ENCODE measurements at regions of chr19 and their contacts with region 1.

Region 1: DNA sequence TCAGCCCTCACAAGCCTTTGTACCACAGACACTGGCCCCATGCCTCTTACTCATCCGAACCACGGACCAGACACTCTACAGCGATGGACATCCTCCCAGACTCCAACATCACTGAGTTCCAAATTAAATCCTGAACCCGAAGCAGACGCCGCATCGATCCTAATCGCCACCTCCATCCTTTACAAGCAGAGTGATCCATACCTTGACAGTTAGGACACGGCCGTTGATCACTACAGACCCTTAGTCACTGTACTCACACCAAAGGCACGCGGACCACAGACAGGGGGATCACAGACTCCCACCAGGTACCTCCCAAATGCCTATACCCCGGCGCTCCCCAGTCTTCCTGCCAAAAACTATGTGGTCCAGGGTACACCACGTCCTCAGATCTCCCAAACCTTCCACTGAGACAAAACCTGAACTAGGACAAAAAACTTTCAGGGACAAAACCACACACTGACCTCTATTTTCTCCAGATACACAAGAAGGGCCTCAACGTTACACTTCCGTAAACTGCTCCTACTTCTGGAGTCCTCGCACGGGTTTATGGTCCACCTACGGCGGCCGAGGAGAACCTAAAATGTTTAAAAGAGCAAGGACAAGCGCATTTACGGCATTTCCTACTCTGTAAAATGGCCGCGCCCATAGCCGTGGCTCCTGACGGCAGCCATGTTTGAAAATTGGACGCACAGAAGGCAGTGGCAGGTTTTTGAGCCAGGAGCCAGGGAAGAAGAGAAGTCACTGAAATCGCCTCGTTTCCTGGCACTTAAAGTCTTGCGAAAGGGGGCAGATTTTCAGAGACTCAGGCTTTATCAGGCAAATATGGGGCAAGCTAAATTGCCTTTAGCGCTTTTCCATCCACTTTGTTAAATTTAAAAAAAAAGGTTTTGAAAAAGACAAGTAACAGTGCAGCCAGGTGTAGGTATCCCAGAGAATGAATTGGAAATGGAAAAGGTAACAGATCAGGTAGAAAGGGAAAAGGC is at the start of gene ZNF350:
- DNase-seq: peak; percentile 76 to 97 (median 85)
- ATAC-seq: peak; percentile 99
- H3K4me3 ChIP-seq: peak within 1 kb of the TSS; percentile 88
- H3K4me3 Mint-ChIP-seq: peak within 1 kb of the TSS; percentile 92
- H3K27ac ChIP-seq: peak within 1 kb of the TSS; percentile 29 to 67
- H3K27ac Mint-ChIP-seq: peak within 1 kb of the TSS; percentile 78
- H3K4me1 ChIP-seq: peaks cover 17% of the 10 kb centered on the region
- H3K4me1 Mint-ChIP-seq: peaks cover 24% of the 10 kb centered on the region
- H3K27me3 ChIP-seq: no peaks in the 10 kb centered on the region
- H3K27me3 Mint-ChIP-seq: no peaks in the 10 kb centered on the region
- CTCF ChIP-seq: no peak
- total RNA-seq, gene ZNF350: 37.6 to 39.2 TPM

Region 2: GRCh38 chr19:51887522-51888498 is 98.8 kb before region 1 on chr19 and contains the start of gene ZNF577:
- CTCF ChIA-PET with region 1: interaction called, 3 read pairs
- POLR2A ChIA-PET with region 1: no interaction called
- intact Hi-C with region 1: loop called in 1 of 2 experiments (anchors 5 kb)
- DNase-seq: peak; percentile 27 to 85 (median 60)
- ATAC-seq: peak; percentile 89
- H3K4me3 ChIP-seq: peak within 1 kb of the TSS; percentile 51
- H3K4me3 Mint-ChIP-seq: peak within 1 kb of the TSS; percentile 97
- H3K27ac ChIP-seq: peak within 1 kb of the TSS in 1 of 2 donors; percentile 20
- H3K27ac Mint-ChIP-seq: peak within 1 kb of the TSS; percentile 87
- H3K4me1 ChIP-seq: peaks cover 7% of the 10 kb centered on the region
- H3K4me1 Mint-ChIP-seq: peaks cover 17% of the 10 kb centered on the region
- H3K27me3 ChIP-seq: no peaks in the 10 kb centered on the region
- H3K27me3 Mint-ChIP-seq: no peaks in the 10 kb centered on the region
- CTCF ChIP-seq: no peak
- total RNA-seq, gene ZNF577: 8.0 to 10.3 TPM

Region 3: GRCh38 chr19:51904331-51905165 is 82.1 kb before region 1 on chr19 and contains the start of gene ZNF649:
- CTCF ChIA-PET with region 1: no interaction called
- POLR2A ChIA-PET with region 1: interaction called, 3 read pairs
- intact Hi-C with region 1: loop called (anchors 5 to 10 kb)
- DNase-seq: peak; percentile 69 to 90 (median 74)
- ATAC-seq: peak; percentile 91
- H3K4me3 ChIP-seq: peak within 1 kb of the TSS; percentile 92
- H3K4me3 Mint-ChIP-seq: peak within 1 kb of the TSS; percentile 100
- H3K27ac ChIP-seq: peak within 1 kb of the TSS; percentile 53 to 58
- H3K27ac Mint-ChIP-seq: peak within 1 kb of the TSS; percentile 89
- H3K4me1 ChIP-seq: peaks cover 14% of the 10 kb centered on the region
- H3K4me1 Mint-ChIP-seq: peaks cover 29% of the 10 kb centered on the region
- H3K27me3 ChIP-seq: peaks cover 6 to 9% of the 10 kb centered on the region in 2 experiments
- H3K27me3 Mint-ChIP-seq: peaks cover 36% of the 10 kb centered on the region
- CTCF ChIP-seq: no peak
- total RNA-seq, gene ZNF649: 13.0 to 13.2 TPM

Region 4: DNA sequence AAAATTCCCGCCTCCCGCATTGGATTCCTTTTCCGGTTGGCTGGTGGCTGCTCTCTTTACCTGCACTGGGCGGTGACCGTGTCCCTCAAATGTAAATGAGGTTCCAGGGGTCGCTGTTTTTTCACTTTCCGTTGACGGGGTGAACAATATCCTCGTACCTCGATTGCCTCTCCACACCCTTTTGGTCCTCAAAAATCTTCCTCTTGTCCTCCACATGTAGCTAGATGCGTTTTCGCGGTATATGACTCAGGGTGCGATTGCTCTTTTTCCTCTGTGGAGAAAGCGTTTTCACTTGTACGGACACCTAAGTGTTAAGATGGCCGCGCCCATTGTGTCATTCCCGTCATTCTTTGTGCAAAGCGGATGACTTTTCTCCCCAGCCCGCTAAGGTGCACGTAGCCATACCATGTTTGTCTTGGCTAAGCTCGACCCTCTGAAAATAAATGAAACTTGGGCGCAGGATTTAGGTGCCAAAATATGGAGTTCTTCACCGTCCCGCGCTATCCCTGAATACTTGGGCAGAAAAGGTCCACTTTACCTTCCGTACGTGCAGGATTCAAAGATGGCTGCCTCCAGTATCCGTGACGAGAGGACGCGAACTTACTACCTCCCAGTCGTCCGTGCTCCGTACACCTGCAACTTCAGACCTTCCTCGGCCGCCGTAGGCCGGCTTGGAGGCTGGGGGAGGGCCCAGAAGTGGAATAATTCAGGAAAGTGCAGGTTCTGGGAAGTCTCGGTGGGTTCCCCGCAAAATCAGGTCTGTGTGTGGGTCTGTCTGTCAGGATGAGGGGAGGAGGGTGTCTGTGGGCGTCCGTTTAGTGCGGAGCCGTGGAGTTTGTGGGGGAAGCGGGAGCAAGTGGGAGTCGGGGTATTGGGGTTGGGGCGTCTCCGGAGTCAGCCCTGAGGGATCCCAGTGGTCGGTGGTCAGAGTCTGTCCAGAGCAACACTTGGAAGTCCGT is 59.5 kb before region 1 on chr19 and contains the start of gene ZNF613:
- CTCF ChIA-PET with region 1: no interaction called
- POLR2A ChIA-PET with region 1: no interaction called
- intact Hi-C with region 1: loop called in 1 of 2 experiments (anchors 1 kb)
- DNase-seq: peak; percentile 72 to 93 (median 79)
- ATAC-seq: peak; percentile 88
- H3K4me3 ChIP-seq: peak within 1 kb of the TSS; percentile 78
- H3K4me3 Mint-ChIP-seq: peak within 1 kb of the TSS; percentile 97
- H3K27ac ChIP-seq: peak within 1 kb of the TSS; percentile 55 to 60
- H3K27ac Mint-ChIP-seq: peak within 1 kb of the TSS; percentile 86
- H3K4me1 ChIP-seq: peaks cover 17% of the 10 kb centered on the region
- H3K4me1 Mint-ChIP-seq: peaks cover 36% of the 10 kb centered on the region
- H3K27me3 ChIP-seq: no peaks in the 10 kb centered on the region
- H3K27me3 Mint-ChIP-seq: no peaks in the 10 kb centered on the region
- CTCF ChIP-seq: peak; percentile 22
- total RNA-seq, gene ZNF613: 0.67 to 1.3 TPM

Region 5: DNA sequence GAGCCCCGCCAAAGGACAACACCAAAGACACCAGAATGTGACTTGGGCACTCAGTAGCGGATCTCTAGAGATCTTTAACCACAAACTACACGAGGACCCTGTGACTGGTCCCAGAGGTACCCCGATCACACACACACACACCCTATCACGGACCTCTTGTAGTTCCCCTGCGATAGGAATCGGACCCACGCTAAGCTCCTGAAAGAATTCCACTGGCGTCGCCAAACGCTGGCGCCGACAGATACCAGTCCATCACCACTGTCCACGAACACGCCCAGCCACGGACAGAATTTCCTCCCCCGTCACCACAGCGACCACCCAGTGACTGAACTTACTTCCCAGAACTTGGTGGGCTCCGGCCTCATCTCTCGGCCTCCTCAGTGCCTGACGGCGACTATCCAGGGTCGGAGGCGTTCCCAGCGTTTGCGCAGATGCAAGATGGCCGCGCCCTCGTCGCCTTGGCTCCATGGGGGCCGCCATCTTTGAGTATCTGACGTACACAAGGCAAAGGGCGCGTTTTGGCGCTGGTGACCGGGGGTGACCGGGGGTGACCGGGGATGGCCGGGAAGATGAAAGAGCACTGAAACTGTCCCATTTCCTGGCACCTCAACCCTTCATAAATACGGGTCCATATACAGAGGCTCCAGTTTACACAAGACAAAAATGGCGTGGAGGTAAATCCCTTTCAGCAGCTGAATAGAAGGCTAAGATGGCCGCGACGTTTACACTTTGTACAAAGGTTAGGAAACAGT is 21.4 kb after region 1 on chr19 and contains the start of gene ZNF615:
- CTCF ChIA-PET with region 1: no interaction called
- POLR2A ChIA-PET with region 1: interaction called, 4 read pairs
- intact Hi-C with region 1: loop called (anchors 1 kb)
- DNase-seq: peak; percentile 78 to 92 (median 82)
- ATAC-seq: peak; percentile 91
- H3K4me3 ChIP-seq: peak within 1 kb of the TSS; percentile 95
- H3K4me3 Mint-ChIP-seq: peak within 1 kb of the TSS; percentile 95
- H3K27ac ChIP-seq: peak within 1 kb of the TSS; percentile 82 to 88
- H3K27ac Mint-ChIP-seq: peak within 1 kb of the TSS; percentile 88
- H3K4me1 ChIP-seq: peaks cover 12% of the 10 kb centered on the region
- H3K4me1 Mint-ChIP-seq: peaks cover 24% of the 10 kb centered on the region
- H3K27me3 ChIP-seq: no peaks in the 10 kb centered on the region
- H3K27me3 Mint-ChIP-seq: no peaks in the 10 kb centered on the region
- CTCF ChIP-seq: no peak
- total RNA-seq, gene ZNF615: 8.9 to 9.2 TPM

Region 6: DNA sequence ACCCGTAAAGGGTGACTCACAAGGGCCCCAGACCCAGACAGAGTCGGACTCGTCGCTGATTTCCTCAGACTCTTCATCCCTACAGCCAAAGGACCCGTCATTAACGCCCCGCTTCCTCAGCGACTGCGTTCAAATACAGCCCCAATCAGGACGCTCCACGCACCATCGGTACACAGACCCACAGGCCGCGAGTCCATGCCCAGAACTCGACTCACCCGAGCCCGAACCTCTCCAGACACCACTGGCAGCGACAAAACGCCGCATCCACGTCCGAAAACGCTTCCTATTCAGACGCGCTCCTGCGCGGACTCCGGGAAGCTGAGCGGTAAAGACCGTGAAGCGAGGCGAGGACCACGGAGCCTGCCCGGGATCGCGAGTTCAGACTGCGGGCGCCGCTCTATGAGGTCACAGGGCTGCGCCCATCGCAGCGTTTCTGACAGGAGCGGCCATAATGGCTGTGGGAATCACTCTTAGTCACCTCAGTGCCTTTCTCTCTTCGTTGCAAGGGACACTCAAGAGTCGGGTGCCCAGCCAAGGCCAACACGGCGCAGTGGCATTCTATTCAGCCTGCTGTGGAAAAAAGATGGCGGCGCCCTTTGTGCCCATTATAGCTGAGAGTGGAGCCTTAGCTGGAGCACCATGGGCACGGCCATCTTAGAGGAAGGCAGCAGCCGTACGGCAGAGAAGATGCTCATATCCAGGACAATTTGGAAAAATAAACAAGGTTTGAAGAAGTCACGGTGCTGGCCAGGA is 41.6 kb after region 1 on chr19 and contains the start of gene ZNF614:
- CTCF ChIA-PET with region 1: no interaction called
- POLR2A ChIA-PET with region 1: no interaction called
- intact Hi-C with region 1: loop called in 1 of 2 experiments (anchors 1 kb)
- DNase-seq: peak; percentile 71 to 92 (median 82)
- ATAC-seq: peak; percentile 85
- H3K4me3 ChIP-seq: peak within 1 kb of the TSS; percentile 85
- H3K4me3 Mint-ChIP-seq: peak within 1 kb of the TSS; percentile 95
- H3K27ac ChIP-seq: peak within 1 kb of the TSS; percentile 89 to 90
- H3K27ac Mint-ChIP-seq: peak within 1 kb of the TSS; percentile 93
- H3K4me1 ChIP-seq: peaks cover 16% of the 10 kb centered on the region
- H3K4me1 Mint-ChIP-seq: peaks cover 38% of the 10 kb centered on the region
- H3K27me3 ChIP-seq: no peaks in the 10 kb centered on the region
- H3K27me3 Mint-ChIP-seq: no peaks in the 10 kb centered on the region
- CTCF ChIP-seq: no peak
- total RNA-seq, gene ZNF614: 9.7 to 10.5 TPM

Region 7: GRCh38 chr19:52048555-52049501 is 62.2 kb after region 1 on chr19 and contains the start of gene ZNF432:
- CTCF ChIA-PET with region 1: no interaction called
- POLR2A ChIA-PET with region 1: interaction called, 4 read pairs
- intact Hi-C with region 1: loop called (anchors 2 to 5 kb)
- DNase-seq: peak; percentile 74 to 91 (median 80)
- ATAC-seq: peak; percentile 85
- H3K4me3 ChIP-seq: peak within 1 kb of the TSS; percentile 79
- H3K4me3 Mint-ChIP-seq: peak within 1 kb of the TSS; percentile 98
- H3K27ac ChIP-seq: peak within 1 kb of the TSS; percentile 89 to 95
- H3K27ac Mint-ChIP-seq: peak within 1 kb of the TSS; percentile 97
- H3K4me1 ChIP-seq: peaks cover 5% of the 10 kb centered on the region
- H3K4me1 Mint-ChIP-seq: peaks cover 37% of the 10 kb centered on the region
- H3K27me3 ChIP-seq: no peaks in the 10 kb centered on the region
- H3K27me3 Mint-ChIP-seq: no peaks in the 10 kb centered on the region
- CTCF ChIP-seq: no peak
- total RNA-seq, gene ZNF432: 16.3 to 19.2 TPM